CD4-positive, alpha-beta T cell (primary cell): ENCODE measurements at regions of chr12 and their contacts with region 1.

Region 1: DNA sequence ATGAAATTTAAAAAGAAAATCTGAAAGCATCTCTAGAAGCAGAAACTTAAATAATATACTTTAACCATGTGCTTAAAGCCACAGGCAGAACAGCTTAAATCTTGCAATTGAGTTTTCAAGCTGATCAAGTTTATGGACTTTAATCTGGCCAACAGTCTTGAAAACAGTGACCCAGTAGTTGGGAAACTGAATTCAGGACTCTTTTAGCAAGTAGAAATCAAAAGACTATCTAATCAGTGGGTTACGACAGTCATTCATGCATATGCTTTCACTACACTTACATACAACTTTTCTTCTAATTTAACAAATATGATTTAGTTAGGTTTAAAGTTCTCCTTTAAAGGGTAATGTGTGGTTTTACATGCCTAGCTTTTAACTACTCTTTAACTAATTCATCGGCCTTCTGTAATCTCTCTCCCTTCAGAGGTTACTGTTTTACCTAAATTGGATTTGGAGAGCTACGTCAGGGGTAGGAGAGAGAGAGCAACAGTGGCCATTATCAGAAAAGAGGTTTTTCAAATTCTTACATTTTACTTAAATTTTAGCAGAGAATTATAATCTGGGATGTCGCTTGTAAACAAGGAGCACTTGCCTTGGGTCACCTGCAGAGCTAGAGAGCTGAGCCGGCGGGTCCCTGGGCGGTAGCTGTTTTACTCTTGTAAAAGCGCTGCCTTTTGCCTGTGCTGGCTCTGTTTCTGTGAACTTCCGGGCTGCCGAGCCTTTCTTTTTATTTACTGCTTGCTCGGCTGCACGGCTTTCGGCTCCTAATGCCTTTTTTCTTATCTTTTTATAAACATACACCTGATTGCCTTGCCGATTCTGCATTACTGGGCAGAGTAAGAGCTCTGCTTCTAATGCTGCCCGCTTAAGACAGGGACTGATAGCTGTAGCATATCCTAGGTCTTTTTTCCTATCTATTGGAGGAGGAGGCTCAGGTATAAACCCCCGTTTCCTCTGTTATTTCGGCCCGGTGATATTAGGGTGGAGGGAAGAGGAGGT is 17.4 kb upstream of the LYZ start:
- DNase-seq: peak; percentile 49 to 81 (median 66)
- ATAC-seq: peak; percentile 74
- H3K4me3 ChIP-seq: peak overlapping the region; percentile 61
- H3K4me3 Mint-ChIP-seq: peak overlapping the region; percentile 98
- H3K27ac ChIP-seq: peak overlapping the region; percentile 83 to 88
- H3K27ac Mint-ChIP-seq: peak overlapping the region; percentile 100
- H3K4me1 ChIP-seq: peaks cover 34% of the 10 kb centered on the region
- H3K4me1 Mint-ChIP-seq: peaks cover 62% of the 10 kb centered on the region
- H3K27me3 ChIP-seq: no peaks in the 10 kb centered on the region
- H3K27me3 Mint-ChIP-seq: no peaks in the 10 kb centered on the region
- CTCF ChIP-seq: no peak

Region 2: DNA sequence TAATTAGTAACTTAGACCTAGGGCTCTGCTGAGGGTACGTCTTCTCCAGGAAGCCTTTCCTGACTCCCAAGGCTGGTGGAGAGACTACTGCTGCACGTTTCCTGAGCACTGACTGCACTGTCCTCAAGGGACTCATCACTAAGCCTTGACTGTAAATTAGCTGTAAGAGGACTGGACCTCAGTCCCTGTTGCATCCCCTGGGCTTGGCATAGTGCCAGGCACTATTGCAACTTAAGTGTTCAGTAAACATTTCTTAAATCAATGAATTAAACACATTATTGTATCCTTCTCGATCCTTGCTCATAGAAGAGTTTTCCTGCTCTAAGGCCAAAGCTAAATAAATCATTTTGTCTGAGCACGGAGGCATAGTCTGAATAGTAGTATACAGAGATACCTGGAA is 1373.4 kb before region 1 on chr12:
- CTCF ChIA-PET with region 1: no interaction called
- POLR2A ChIA-PET with region 1: no interaction called
- intact Hi-C with region 1: no loop called
- DNase-seq: no peak
- ATAC-seq: no peak
- H3K4me3 ChIP-seq: no peak overlapping the region
- H3K4me3 Mint-ChIP-seq: no peak overlapping the region
- H3K27ac ChIP-seq: no peak overlapping the region
- H3K27ac Mint-ChIP-seq: no peak overlapping the region
- H3K4me1 ChIP-seq: no peaks in the 10 kb centered on the region
- H3K4me1 Mint-ChIP-seq: no peaks in the 10 kb centered on the region
- H3K27me3 ChIP-seq: no peaks in the 10 kb centered on the region
- H3K27me3 Mint-ChIP-seq: peaks cover 4% of the 10 kb centered on the region
- CTCF ChIP-seq: no peak

Region 3: DNA sequence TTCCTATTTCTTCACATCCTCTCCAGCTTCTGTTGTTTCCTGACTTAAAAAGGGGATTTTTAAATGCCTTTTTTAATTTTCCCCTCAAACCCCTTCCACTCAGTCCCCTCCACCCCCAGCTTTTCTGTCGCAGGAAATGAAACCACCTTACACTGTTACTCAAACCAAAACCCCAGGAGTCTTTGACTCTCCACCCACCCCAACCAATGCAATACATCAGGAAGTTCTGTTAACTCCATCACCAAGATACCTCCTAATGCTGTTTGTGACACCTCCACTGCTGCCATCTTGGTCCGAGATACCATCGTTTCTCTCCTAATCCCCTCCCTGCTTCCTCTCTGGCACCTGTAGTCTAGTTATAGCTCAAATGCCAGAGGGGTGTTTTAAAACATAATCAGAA is 372.5 kb before region 1 on chr12:
- CTCF ChIA-PET with region 1: no interaction called
- POLR2A ChIA-PET with region 1: no interaction called
- intact Hi-C with region 1: no loop called
- DNase-seq: no peak
- ATAC-seq: no peak
- H3K4me3 ChIP-seq: no peak overlapping the region
- H3K4me3 Mint-ChIP-seq: no peak overlapping the region
- H3K27ac ChIP-seq: no peak overlapping the region
- H3K27ac Mint-ChIP-seq: no peak overlapping the region
- H3K4me1 ChIP-seq: peaks cover 5% of the 10 kb centered on the region
- H3K4me1 Mint-ChIP-seq: no peaks in the 10 kb centered on the region
- H3K27me3 ChIP-seq: no peaks in the 10 kb centered on the region
- H3K27me3 Mint-ChIP-seq: no peaks in the 10 kb centered on the region
- CTCF ChIP-seq: no peak

Region 4: GRCh38 chr12:69239352-69239921 is 91.3 kb before region 1 on chr12 and contains the start of gene CPSF6:
- CTCF ChIA-PET with region 1: no interaction called
- POLR2A ChIA-PET with region 1: interaction called, 26 read pairs
- intact Hi-C with region 1: no loop called
- DNase-seq: peak; percentile 93 to 99 (median 96)
- ATAC-seq: peak; percentile 85
- H3K4me3 ChIP-seq: peak within 1 kb of the TSS; percentile 87
- H3K4me3 Mint-ChIP-seq: peak within 1 kb of the TSS; percentile 97
- H3K27ac ChIP-seq: peak within 1 kb of the TSS; percentile 85 to 86
- H3K27ac Mint-ChIP-seq: peak within 1 kb of the TSS; percentile 99
- H3K4me1 ChIP-seq: peaks cover 30% of the 10 kb centered on the region
- H3K4me1 Mint-ChIP-seq: peaks cover 59% of the 10 kb centered on the region
- H3K27me3 ChIP-seq: no peaks in the 10 kb centered on the region
- H3K27me3 Mint-ChIP-seq: no peaks in the 10 kb centered on the region
- CTCF ChIP-seq: no peak
- total RNA-seq, gene CPSF6: 80.9 to 86.7 TPM

Region 5: GRCh38 chr12:69290545-69291277 is 40.1 kb before region 1 on chr12:
- CTCF ChIA-PET with region 1: interaction called, 13 read pairs
- POLR2A ChIA-PET with region 1: interaction called, 23 read pairs
- intact Hi-C with region 1: loop called (anchors 2 to 5 kb)
- DNase-seq: peak; percentile 70 to 91 (median 78)
- ATAC-seq: peak; percentile 100
- H3K4me3 ChIP-seq: no peak overlapping the region
- H3K4me3 Mint-ChIP-seq: no peak overlapping the region
- H3K27ac ChIP-seq: no peak overlapping the region
- H3K27ac Mint-ChIP-seq: no peak overlapping the region
- H3K4me1 ChIP-seq: peaks cover 7% of the 10 kb centered on the region
- H3K4me1 Mint-ChIP-seq: peaks cover 6% of the 10 kb centered on the region
- H3K27me3 ChIP-seq: no peaks in the 10 kb centered on the region
- H3K27me3 Mint-ChIP-seq: peaks cover 35% of the 10 kb centered on the region
- CTCF ChIP-seq: peak; percentile 93

Region 6: GRCh38 chr12:69359531-69360347 is 29.0 kb after region 1 on chr12 and contains the start of gene YEATS4:
- CTCF ChIA-PET with region 1: interaction called, 8 read pairs
- POLR2A ChIA-PET with region 1: interaction called, 38 read pairs
- intact Hi-C with region 1: loop called in 1 of 2 experiments (anchors 2 kb)
- DNase-seq: peak; percentile 70 to 95 (median 81)
- ATAC-seq: peak; percentile 81
- H3K4me3 ChIP-seq: peak within 1 kb of the TSS; percentile 100
- H3K4me3 Mint-ChIP-seq: peak within 1 kb of the TSS; percentile 97
- H3K27ac ChIP-seq: peak within 1 kb of the TSS; percentile 96 to 99
- H3K27ac Mint-ChIP-seq: peak within 1 kb of the TSS; percentile 95
- H3K4me1 ChIP-seq: peaks cover 21% of the 10 kb centered on the region
- H3K4me1 Mint-ChIP-seq: peaks cover 27% of the 10 kb centered on the region
- H3K27me3 ChIP-seq: no peaks in the 10 kb centered on the region
- H3K27me3 Mint-ChIP-seq: peaks cover under 1% of the 10 kb centered on the region
- CTCF ChIP-seq: no peak
- total RNA-seq, gene YEATS4: 26.2 TPM

Region 7: DNA sequence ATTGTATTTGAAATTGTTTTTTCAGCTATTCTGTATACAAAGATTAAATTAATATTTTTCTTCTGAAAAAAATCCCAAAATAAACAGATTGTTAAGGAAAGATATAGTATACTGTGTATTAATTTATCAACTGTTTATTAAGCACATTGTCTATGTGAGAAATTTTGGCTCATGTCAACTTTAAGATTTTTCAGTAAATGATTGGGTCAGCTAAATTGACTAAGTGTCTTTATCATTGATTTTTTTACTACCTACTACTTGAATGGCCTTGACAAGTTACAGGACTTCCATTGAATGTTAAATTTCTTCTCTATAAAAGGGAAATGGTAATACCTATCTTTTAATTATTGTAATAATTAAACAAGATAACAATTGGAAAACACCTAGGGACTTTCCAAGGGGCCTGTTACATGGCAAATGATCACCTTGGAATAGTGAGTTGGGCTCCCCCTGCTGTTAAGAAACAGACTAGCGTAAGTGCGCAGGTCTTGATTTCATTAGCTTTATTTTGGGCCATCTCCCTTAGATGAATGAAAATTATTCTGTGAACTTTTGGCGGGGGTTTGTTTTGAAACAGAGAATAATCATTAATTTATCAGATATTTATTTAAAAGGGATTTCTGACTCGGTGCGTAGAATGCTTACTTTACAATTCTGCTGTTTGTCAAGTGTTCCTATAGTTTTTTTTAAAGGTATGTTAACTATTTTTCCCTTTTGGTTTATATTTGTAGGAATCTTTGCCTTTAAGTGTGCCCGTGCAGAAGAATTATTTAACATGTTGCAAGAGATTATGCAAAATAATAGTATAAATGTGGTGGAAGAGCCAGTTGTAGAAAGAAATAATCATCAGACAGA is 240.0 kb after region 1 on chr12:
- CTCF ChIA-PET with region 1: interaction called, 7 read pairs
- POLR2A ChIA-PET with region 1: interaction called, 18 read pairs
- intact Hi-C with region 1: no loop called
- DNase-seq: peak; percentile 15 to 87 (median 36)
- ATAC-seq: peak; percentile 88
- H3K4me3 ChIP-seq: no peak overlapping the region
- H3K4me3 Mint-ChIP-seq: no peak overlapping the region
- H3K27ac ChIP-seq: no peak overlapping the region
- H3K27ac Mint-ChIP-seq: no peak overlapping the region
- H3K4me1 ChIP-seq: no peaks in the 10 kb centered on the region
- H3K4me1 Mint-ChIP-seq: no peaks in the 10 kb centered on the region
- H3K27me3 ChIP-seq: no peaks in the 10 kb centered on the region
- H3K27me3 Mint-ChIP-seq: no peaks in the 10 kb centered on the region
- CTCF ChIP-seq: peak; percentile 92

Region 8: DNA sequence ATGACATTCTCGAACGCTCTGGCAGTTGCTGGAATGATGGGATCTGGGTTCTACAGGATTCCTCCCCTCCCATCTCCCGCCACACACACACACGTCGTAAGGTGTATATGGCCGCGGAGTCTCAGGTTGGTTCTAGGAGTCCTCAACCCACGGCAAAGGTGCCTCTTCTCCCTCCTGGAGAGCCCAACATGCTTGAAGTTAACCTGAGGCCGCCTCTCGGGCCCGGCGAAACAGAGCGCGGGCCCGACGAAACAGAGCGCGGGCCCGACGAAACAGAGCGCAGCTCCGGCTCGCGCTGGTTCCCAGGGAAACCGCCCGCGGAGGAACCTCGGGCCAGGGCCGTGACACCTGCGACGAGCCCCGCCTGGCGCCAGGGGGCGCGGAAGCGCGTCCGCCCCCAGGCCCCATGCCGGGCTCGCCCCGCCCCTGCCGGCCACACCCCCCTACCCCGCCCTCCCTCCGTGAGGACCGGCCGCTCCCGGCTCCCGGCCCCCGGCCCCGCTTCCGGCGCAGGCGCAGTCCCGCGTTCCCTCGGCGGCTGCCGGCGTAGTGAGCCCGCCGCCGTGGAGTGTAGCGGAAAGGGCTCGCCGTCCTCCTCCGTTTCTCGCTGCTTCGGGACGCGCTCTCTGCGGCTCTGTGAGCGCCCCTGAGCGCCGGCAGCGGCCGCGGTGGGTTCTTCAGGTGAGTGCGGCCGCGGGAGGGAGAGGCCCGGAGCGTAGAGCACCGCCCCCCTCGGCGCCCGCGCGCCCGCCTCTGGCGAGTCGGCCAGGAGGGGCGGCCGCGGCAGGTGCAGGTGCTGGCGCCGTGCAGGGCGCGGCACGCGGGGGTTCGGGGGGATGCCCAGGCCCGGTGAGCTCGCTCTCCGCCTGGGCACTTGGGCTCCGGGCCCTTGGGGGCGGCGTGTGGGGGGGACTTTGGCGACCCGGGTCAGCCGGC is 407.8 kb after region 1 on chr12 and contains the start of gene RAB3IP:
- CTCF ChIA-PET with region 1: interaction called, 4 read pairs
- POLR2A ChIA-PET with region 1: interaction called, 12 read pairs
- intact Hi-C with region 1: no loop called
- DNase-seq: peak; percentile 84 to 98 (median 92)
- ATAC-seq: peak; percentile 84
- H3K4me3 ChIP-seq: peak within 1 kb of the TSS; percentile 82
- H3K4me3 Mint-ChIP-seq: peak within 1 kb of the TSS; percentile 86
- H3K27ac ChIP-seq: peak within 1 kb of the TSS; percentile 48 to 68
- H3K27ac Mint-ChIP-seq: peak within 1 kb of the TSS; percentile 80
- H3K4me1 ChIP-seq: peaks cover 11% of the 10 kb centered on the region
- H3K4me1 Mint-ChIP-seq: peaks cover 27% of the 10 kb centered on the region
- H3K27me3 ChIP-seq: no peaks in the 10 kb centered on the region
- H3K27me3 Mint-ChIP-seq: peaks cover 6% of the 10 kb centered on the region
- CTCF ChIP-seq: peak; percentile 75
- total RNA-seq, gene RAB3IP: 15.2 to 19.6 TPM